ENCODE measurements at regions of chr17 and their contacts with region 1.

Region 1: GRCh38 chr17:78250891-78251794 is 19.7 kb downstream of the TMEM235 start:
- DNase-seq: peak; percentile 93
- H3K4me3 Mint-ChIP-seq: peak overlapping the region; percentile 75
- H3K27ac Mint-ChIP-seq: peak overlapping the region; percentile 67
- H3K4me1 Mint-ChIP-seq: peaks cover 35% of the 10 kb centered on the region
- H3K27me3 Mint-ChIP-seq: no peaks in the 10 kb centered on the region

Region 2: DNA sequence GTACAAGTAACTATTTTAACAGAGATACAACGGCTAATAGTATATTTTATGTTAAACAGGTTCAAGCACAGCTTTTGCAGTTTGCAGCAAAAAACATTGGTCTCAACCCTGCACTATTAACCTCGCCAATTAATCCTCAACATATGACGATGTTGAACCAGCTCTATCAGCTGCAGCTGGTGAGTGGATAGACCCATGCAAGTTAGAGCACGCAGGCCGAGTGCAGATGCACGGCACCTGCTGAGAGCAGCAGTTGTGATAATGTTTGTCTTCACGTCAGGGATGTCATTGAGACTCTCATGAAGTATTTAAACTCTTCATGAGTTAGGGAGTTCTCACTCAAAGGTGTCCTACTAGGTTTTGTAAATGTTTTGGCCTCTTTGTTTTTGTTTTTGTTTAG is 168.2 kb before region 1 on chr17:
- CTCF ChIA-PET with region 1: interaction called, 5 read pairs
- intact Hi-C with region 1: loop called (anchors 1 kb)
- DNase-seq: no peak
- H3K4me3 Mint-ChIP-seq: no peak overlapping the region
- H3K27ac Mint-ChIP-seq: no peak overlapping the region
- H3K4me1 Mint-ChIP-seq: no peaks in the 10 kb centered on the region
- H3K27me3 Mint-ChIP-seq: no peaks in the 10 kb centered on the region

Region 3: GRCh38 chr17:78214706-78215061 is 36.5 kb before region 1 on chr17:
- CTCF ChIA-PET with region 1: interaction called, 8 read pairs
- intact Hi-C with region 1: loop called (anchors 2 kb)
- DNase-seq: no peak
- H3K4me3 Mint-ChIP-seq: peak overlapping the region; percentile 92
- H3K27ac Mint-ChIP-seq: peak overlapping the region; percentile 19
- H3K4me1 Mint-ChIP-seq: peaks cover 8% of the 10 kb centered on the region
- H3K27me3 Mint-ChIP-seq: no peaks in the 10 kb centered on the region

Region 4: GRCh38 chr17:78272181-78272913 is 21.2 kb after region 1 on chr17:
- CTCF ChIA-PET with region 1: interaction called, 17 read pairs
- intact Hi-C with region 1: loop called (anchors 2 kb)
- DNase-seq: peak; percentile 93
- H3K4me3 Mint-ChIP-seq: peak overlapping the region; percentile 51
- H3K27ac Mint-ChIP-seq: peak overlapping the region; percentile 47
- H3K4me1 Mint-ChIP-seq: peaks cover 40% of the 10 kb centered on the region
- H3K27me3 Mint-ChIP-seq: no peaks in the 10 kb centered on the region

Region 5: GRCh38 chr17:78421484-78422266 is 170.5 kb after region 1 on chr17:
- CTCF ChIA-PET with region 1: interaction called, 30 read pairs
- intact Hi-C with region 1: loop called (anchors 1 kb)
- DNase-seq: peak; percentile 85
- H3K4me3 Mint-ChIP-seq: no peak overlapping the region
- H3K27ac Mint-ChIP-seq: peak overlapping the region; percentile 70
- H3K4me1 Mint-ChIP-seq: peaks cover 45% of the 10 kb centered on the region
- H3K27me3 Mint-ChIP-seq: no peaks in the 10 kb centered on the region

Region 6: DNA sequence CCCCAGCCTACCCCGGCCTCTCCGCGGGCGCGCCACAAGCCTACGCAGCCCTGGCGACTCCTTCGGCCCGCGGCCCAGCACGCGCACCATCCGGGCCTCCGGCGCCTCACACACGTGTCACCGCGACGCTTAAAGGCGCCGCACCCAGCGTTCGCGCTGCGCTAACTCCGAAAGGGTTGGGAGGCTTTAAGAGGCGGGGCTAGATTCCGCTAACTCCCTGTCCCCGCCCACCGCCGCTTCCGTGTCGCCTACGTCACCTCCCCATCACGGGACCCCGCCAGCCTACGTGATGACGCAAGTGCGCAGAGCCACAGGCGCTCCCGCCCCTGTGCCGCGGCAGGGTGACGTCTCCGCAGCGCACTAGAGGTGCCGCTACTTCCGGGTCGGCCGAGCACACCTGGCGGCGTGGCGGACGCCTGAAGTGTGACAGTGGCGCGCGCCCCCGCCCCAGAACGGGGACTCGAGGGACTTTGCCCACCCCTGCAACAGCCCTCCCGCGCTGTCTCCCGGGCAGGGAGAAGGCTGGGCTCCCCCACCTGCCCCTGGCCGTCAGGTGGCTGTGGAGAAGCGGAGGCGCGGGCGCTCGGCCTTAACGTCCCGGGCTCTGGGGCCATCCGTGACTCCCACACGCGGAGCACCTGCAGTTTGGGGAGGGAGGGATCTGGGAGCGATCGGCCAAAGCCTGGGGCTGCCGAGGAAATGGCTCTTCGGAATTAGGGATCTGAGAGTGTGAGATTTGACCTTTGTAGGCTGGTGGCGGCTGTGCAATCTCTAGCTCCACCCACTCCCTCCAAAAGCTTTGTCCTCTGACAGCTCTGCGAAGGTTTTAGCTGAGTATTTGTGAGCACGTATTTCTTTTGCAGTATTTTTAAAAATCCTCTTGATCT is 589.8 kb after region 1 on chr17 and contains the start of gene USP36:
- CTCF ChIA-PET with region 1: no interaction called
- intact Hi-C with region 1: loop called (anchors 5 kb)
- DNase-seq: peak; percentile 100
- H3K4me3 Mint-ChIP-seq: peak within 1 kb of the TSS; percentile 96
- H3K27ac Mint-ChIP-seq: peak within 1 kb of the TSS; percentile 93
- H3K4me1 Mint-ChIP-seq: peaks cover 44% of the 10 kb centered on the region
- H3K27me3 Mint-ChIP-seq: no peaks in the 10 kb centered on the region
- total RNA-seq, gene USP36: 65.3 to 68.7 TPM

Measured in activated naive CD4-positive, alpha-beta T cell treated with anti-CD3 and anti-CD28 coated beads for 36 hours (primary cell).